Prostate gland (tissue), 2 donors: ENCODE measurements at regions of chr7 and their contacts with region 1.

Region 1: DNA sequence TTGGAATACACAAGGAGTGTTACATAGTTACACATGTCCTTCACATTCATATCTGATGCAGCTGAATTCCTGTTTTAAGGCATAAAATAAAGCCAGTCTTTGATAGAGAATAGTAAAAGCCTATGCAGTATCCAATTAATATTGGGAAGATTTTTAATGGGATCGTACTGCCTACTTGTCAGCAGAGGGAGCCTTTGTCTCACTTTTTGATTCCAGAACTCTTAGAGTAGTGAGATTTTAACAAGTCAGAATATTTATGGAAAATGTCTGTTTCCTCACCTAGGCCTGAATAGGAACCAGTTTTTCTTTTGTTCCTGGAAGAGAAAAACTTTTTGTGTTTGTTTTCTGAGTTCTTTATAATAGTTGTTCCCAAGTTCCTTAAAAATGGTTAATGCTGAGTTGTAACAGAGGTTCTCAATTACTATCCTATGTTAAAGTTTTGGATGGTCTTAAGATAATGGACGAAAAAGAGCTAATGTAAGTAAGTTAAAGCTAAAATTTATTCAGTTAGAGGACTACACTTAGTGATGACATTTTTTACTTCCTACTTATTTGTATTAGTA is 114.0 kb downstream of the BBS9 start:
- DNase-seq: no peak
- H3K4me3 ChIP-seq: no peak overlapping the region
- H3K27ac ChIP-seq: no peak overlapping the region
- H3K4me1 ChIP-seq: no peaks in the 10 kb centered on the region
- H3K27me3 ChIP-seq: no peaks in the 10 kb centered on the region
- CTCF ChIP-seq: peak; percentile 38 to 74 (median 58)
- POLR2A ChIP-seq: no peak

Region 2: DNA sequence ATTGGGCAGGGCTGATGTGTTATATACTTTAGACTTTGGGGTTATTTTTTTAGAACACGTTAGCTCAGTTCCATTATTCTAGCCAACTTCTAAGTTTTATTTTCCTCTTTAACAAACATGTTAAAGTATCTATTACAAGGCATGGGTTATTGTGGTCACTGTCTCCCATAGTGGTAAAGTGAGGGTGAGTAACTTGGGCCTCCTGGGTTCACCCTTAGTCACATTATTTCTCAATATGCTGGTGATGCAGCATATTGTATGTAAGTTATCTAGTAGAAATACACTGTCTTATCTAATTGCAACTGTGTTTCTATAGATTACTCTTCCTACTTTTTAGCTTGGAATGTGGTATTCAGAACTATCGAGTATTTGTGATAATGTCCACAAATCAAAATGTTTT is 48.1 kb before region 1 on chr7:
- intact Hi-C with region 1: no loop called
- DNase-seq: no peak
- H3K4me3 ChIP-seq: no peak overlapping the region
- H3K27ac ChIP-seq: no peak overlapping the region
- H3K4me1 ChIP-seq: no peaks in the 10 kb centered on the region
- H3K27me3 ChIP-seq: no peaks in the 10 kb centered on the region
- CTCF ChIP-seq: no peak
- POLR2A ChIP-seq: no peak

Region 3: GRCh38 chr7:33262476-33262875 is 19.1 kb after region 1 on chr7:
- intact Hi-C with region 1: no loop called
- DNase-seq: no peak
- H3K4me3 ChIP-seq: no peak overlapping the region
- H3K27ac ChIP-seq: no peak overlapping the region
- H3K4me1 ChIP-seq: no peaks in the 10 kb centered on the region
- H3K27me3 ChIP-seq: no peaks in the 10 kb centered on the region
- CTCF ChIP-seq: no peak
- POLR2A ChIP-seq: no peak

Region 4: GRCh38 chr7:33744293-33745075 is 501.1 kb after region 1 on chr7:
- intact Hi-C with region 1: loop called (anchors 10 kb)
- DNase-seq: no peak
- H3K4me3 ChIP-seq: no peak overlapping the region
- H3K27ac ChIP-seq: peak overlapping the region in 1 of 2 donors; percentile 59
- H3K4me1 ChIP-seq: no peaks in the 10 kb centered on the region
- H3K27me3 ChIP-seq: no peaks in the 10 kb centered on the region
- CTCF ChIP-seq: peak in 2 of 4 experiments; percentile 23 to 37
- POLR2A ChIP-seq: no peak

Region 5: DNA sequence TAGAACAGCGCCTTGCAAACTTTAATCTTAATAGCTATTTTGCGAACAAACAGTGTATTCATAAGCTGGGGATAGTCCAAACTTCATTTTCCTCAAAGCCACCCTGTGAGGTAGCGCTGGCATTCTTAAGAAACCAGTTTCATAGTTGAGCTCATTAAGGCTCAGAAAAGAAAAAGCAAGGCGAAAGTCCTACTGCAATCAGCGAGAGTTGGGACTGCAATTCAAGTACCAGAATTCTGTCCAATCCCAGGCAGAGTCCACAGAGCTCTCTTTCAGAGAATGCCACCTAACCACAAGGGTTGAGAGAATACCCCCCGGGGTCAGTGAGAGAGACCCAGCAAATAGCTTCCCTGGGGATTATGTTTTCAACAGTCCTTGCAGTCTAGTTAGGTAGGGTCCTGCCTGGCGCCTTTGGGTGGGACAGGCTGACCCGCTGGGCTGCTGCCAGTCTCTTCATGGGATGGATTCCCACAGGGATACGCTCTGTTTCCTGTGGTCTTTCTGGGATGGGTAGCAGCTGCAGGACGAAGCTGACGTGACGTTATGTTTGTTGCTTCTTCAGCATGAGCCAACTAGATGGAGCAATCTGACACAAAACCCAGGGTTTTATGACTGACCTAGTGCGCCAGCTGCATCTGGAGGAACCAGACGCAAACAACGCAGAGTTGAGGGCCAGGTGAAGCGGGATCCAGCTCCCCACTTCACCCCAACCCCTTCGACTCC is 678.0 kb after region 1 on chr7:
- intact Hi-C with region 1: loop called (anchors 10 kb)
- DNase-seq: no peak
- H3K4me3 ChIP-seq: no peak overlapping the region
- H3K27ac ChIP-seq: no peak overlapping the region
- H3K4me1 ChIP-seq: no peaks in the 10 kb centered on the region
- H3K27me3 ChIP-seq: no peaks in the 10 kb centered on the region
- CTCF ChIP-seq: no peak
- POLR2A ChIP-seq: no peak